ENCODE measurements at regions of chr17 and their contacts with region 1.

Region 1: GRCh38 chr17:82022981-82023374 is at the start of gene LRRC45:
- DNase-seq: peak; percentile 100
- H3K4me3 ChIP-seq: peak within 1 kb of the TSS; percentile 85
- H3K4me3 Mint-ChIP-seq: peak within 1 kb of the TSS; percentile 83
- H3K27ac Mint-ChIP-seq: peak within 1 kb of the TSS; percentile 59
- H3K4me1 ChIP-seq: peaks cover 15% of the 10 kb centered on the region
- H3K4me1 Mint-ChIP-seq: peaks cover 6% of the 10 kb centered on the region
- H3K27me3 ChIP-seq: no peaks in the 10 kb centered on the region
- H3K27me3 Mint-ChIP-seq: no peaks in the 10 kb centered on the region
- CTCF ChIP-seq: no peak
- total RNA-seq, gene LRRC45: 33.2 and 38.2 TPM in 2 replicates

Region 2: GRCh38 chr17:81871387-81872230 is 151.4 kb before region 1 on chr17:
- CTCF ChIA-PET with region 1: interaction called, 3 read pairs
- POLR2A ChIA-PET with region 1: no interaction called
- intact Hi-C with region 1: loop called (anchors 5 kb)
- DNase-seq: peak; percentile 58 to 97
- H3K4me3 ChIP-seq: peak overlapping the region; percentile 81
- H3K4me3 Mint-ChIP-seq: peak overlapping the region; percentile 78
- H3K27ac Mint-ChIP-seq: peak overlapping the region; percentile 87
- H3K4me1 ChIP-seq: peaks cover 43% of the 10 kb centered on the region
- H3K4me1 Mint-ChIP-seq: peaks cover 16% of the 10 kb centered on the region
- H3K27me3 ChIP-seq: no peaks in the 10 kb centered on the region
- H3K27me3 Mint-ChIP-seq: no peaks in the 10 kb centered on the region
- CTCF ChIP-seq: peak; percentile 26 to 52

Region 3: GRCh38 chr17:81959362-81960129 is 63.4 kb before region 1 on chr17:
- CTCF ChIA-PET with region 1: interaction called, 92 read pairs
- POLR2A ChIA-PET with region 1: interaction called, 7 read pairs
- intact Hi-C with region 1: loop called (anchors 1 kb)
- DNase-seq: peak in 1 of 2 experiments; percentile 88
- H3K4me3 ChIP-seq: peak overlapping the region; percentile 65
- H3K4me3 Mint-ChIP-seq: peak overlapping the region; percentile 70
- H3K27ac Mint-ChIP-seq: no peak overlapping the region
- H3K4me1 ChIP-seq: peaks cover 33% of the 10 kb centered on the region
- H3K4me1 Mint-ChIP-seq: peaks cover 6% of the 10 kb centered on the region
- H3K27me3 ChIP-seq: 0 out of 2 replicates have a peak, but pooled peaks cover 1% of the 10 kb centered on the region
- H3K27me3 Mint-ChIP-seq: no peaks in the 10 kb centered on the region
- CTCF ChIP-seq: peak; percentile 62 to 87

Region 4: DNA sequence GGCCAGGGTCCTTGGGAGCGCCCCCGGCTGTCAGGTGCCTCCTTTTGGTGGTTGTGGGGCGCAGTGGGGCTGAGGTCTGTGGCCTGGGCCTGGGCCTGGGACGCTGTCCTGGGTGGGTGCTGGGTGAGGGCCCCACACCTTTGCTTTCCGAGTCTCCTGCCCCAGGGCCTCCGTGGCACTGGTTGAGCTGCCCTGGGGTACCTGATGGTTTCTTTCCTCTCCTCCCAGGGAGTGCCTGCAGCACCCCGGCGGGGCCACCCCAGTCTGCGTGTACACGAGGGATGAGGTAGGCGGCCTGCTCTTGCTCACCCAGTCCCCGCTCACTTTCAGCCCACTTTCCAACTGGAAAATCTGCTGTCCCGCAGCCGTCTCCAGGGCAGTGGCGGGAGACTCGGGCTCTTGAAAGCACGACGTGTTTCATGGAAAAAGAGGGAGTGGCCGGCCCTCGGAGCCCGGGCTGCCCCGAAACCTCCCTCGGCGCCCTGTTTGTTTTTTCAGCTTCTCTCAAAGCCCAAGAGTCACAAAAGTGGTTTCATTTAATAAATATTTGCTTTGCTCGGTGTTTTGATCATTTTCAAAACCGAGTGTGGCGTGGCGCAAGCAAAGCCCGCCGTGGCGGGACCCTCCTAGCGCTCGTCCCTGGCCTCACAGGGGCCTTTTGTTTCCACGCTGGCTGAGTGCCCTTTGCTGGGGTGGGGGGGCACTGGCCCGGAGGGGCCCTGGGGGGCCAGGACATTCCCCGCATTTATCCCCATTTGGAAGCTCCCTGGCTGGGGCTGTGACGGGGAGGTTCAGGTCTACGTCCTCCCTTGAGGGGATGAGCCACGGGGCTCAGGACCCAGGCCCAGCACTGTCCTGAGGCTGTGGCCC is 28.1 kb before region 1 on chr17:
- CTCF ChIA-PET with region 1: interaction called, 13 read pairs
- POLR2A ChIA-PET with region 1: interaction called, 5 read pairs
- intact Hi-C with region 1: no loop called
- DNase-seq: no peak
- H3K4me3 ChIP-seq: no peak overlapping the region
- H3K4me3 Mint-ChIP-seq: no peak overlapping the region
- H3K27ac Mint-ChIP-seq: no peak overlapping the region
- H3K4me1 ChIP-seq: peaks cover 18% of the 10 kb centered on the region; the same call in 1 of the 2 replicates
- H3K4me1 Mint-ChIP-seq: peaks cover 6% of the 10 kb centered on the region
- H3K27me3 ChIP-seq: no peaks in the 10 kb centered on the region
- H3K27me3 Mint-ChIP-seq: no peaks in the 10 kb centered on the region
- CTCF ChIP-seq: no peak

Region 5: DNA sequence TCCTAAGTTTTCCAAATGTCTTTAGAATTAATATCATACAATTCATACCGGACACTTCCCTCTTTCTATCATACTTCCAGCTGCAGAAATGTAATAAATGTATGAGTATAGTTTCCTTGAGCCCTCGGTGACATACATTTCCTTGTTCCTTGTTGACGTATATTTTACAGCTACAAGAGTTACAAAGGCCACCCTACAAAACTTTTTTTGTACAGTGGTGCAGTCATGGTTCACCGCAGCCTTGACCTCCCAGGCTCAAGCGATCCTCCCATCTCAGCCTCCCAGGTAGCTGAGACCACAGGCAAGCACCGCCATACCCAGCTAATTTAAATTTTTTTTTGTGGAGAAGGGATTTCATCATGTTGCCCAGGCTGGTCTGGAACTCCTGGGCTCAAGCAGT is 49.8 kb after region 1 on chr17:
- CTCF ChIA-PET with region 1: no interaction called
- POLR2A ChIA-PET with region 1: no interaction called
- intact Hi-C with region 1: no loop called
- DNase-seq: no peak
- H3K4me3 ChIP-seq: no peak overlapping the region
- H3K4me3 Mint-ChIP-seq: no peak overlapping the region
- H3K27ac Mint-ChIP-seq: no peak overlapping the region
- H3K4me1 ChIP-seq: no peaks in the 10 kb centered on the region
- H3K4me1 Mint-ChIP-seq: no peaks in the 10 kb centered on the region
- H3K27me3 ChIP-seq: no peaks in the 10 kb centered on the region
- H3K27me3 Mint-ChIP-seq: no peaks in the 10 kb centered on the region
- CTCF ChIP-seq: no peak

Region 6: GRCh38 chr17:82098072-82098821 is 75.3 kb after region 1 on chr17 and contains the start of gene FASN:
- CTCF ChIA-PET with region 1: no interaction called
- POLR2A ChIA-PET with region 1: interaction called, 13 read pairs
- intact Hi-C with region 1: no loop called
- DNase-seq: peak; percentile 95 to 97
- H3K4me3 ChIP-seq: peak within 1 kb of the TSS; percentile 93
- H3K4me3 Mint-ChIP-seq: peak within 1 kb of the TSS; percentile 76
- H3K27ac Mint-ChIP-seq: peak within 1 kb of the TSS; percentile 86
- H3K4me1 ChIP-seq: peaks cover 52% of the 10 kb centered on the region
- H3K4me1 Mint-ChIP-seq: peaks cover 5% of the 10 kb centered on the region
- H3K27me3 ChIP-seq: no peaks in the 10 kb centered on the region
- H3K27me3 Mint-ChIP-seq: no peaks in the 10 kb centered on the region
- CTCF ChIP-seq: peak; percentile 26 to 59
- total RNA-seq, gene FASN: 330 and 359 TPM in 2 replicates

Region 7: DNA sequence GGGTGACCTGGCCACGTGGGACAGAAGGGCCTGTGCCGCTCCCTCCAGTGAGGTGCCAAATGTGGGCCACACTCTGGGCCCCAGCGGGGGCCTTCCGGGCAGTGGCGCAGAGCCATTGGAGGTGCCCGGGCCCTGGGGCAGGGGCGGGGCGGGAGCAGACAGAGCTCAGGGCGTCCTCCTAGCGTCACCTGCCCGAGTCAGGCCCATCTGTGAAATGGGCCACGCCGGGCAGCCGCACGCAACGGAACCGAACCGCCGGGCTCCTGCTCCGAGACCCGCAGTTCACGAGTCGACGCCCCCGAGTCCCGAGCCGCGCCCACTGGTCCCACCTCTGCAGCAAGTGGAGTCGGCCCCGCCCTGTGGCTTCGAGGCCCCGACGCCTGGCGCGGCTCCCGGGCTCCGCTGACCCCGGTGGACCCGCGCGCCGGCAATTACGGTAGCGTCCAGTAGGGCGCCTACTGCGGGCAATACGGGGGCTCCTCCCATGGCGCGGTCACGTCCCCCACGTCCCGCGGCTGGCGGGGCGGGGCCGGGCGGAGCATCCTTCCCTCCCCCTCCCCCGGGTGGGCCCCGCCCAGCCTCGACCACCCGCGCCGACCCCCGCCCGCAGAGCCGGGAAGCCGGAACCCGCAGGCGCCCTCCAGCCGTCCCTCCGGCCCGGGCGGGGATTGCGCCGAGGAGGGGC is 207.8 kb after region 1 on chr17:
- CTCF ChIA-PET with region 1: no interaction called
- POLR2A ChIA-PET with region 1: no interaction called
- intact Hi-C with region 1: no loop called
- DNase-seq: peak in 1 of 2 experiments; percentile 41
- H3K4me3 ChIP-seq: peak overlapping the region; percentile 59
- H3K4me3 Mint-ChIP-seq: no peak overlapping the region
- H3K27ac Mint-ChIP-seq: no peak overlapping the region
- H3K4me1 ChIP-seq: peaks cover 46% of the 10 kb centered on the region
- H3K4me1 Mint-ChIP-seq: no peaks in the 10 kb centered on the region
- H3K27me3 ChIP-seq: no peaks in the 10 kb centered on the region
- H3K27me3 Mint-ChIP-seq: no peaks in the 10 kb centered on the region
- CTCF ChIP-seq: peak in 1 of 2 experiments; percentile 14